ENCODE measurements at regions of chr18 and their contacts with region 1.

Region 1: GRCh38 chr18:9971313-9971920 is 57.6 kb downstream of the VAPA start:
- DNase-seq: peak; percentile 49 to 59 (median 57)
- H3K4me3 ChIP-seq: no peak overlapping the region
- H3K4me3 Mint-ChIP-seq: no peak overlapping the region
- H3K27ac ChIP-seq: no peak overlapping the region
- H3K27ac Mint-ChIP-seq: no peak overlapping the region
- H3K4me1 ChIP-seq: peaks cover 1% of the 10 kb centered on the region
- H3K4me1 Mint-ChIP-seq: peaks cover 7 to 29% (median 11%) of the 10 kb centered on the region in 4 donors
- H3K27me3 ChIP-seq: no peaks in the 10 kb centered on the region
- H3K27me3 Mint-ChIP-seq: peaks cover 27 to 28% of the 10 kb centered on the region in 2 donors

Region 2: GRCh38 chr18:9433671-9434121 is 537.7 kb before region 1 on chr18:
- CTCF ChIA-PET with region 1: no interaction called
- POLR2A ChIA-PET with region 1: no interaction called
- intact Hi-C with region 1: no loop called
- DNase-seq: no peak
- H3K4me3 ChIP-seq: no peak overlapping the region
- H3K4me3 Mint-ChIP-seq: no peak overlapping the region
- H3K27ac ChIP-seq: no peak overlapping the region
- H3K27ac Mint-ChIP-seq: no peak overlapping the region
- H3K4me1 ChIP-seq: no peaks in the 10 kb centered on the region
- H3K4me1 Mint-ChIP-seq: no peaks in the 10 kb centered on the region
- H3K27me3 ChIP-seq: no peaks in the 10 kb centered on the region
- H3K27me3 Mint-ChIP-seq: peaks cover 6 to 8% of the 10 kb centered on the region in 2 donors

Region 3: GRCh38 chr18:9961041-9961440 is 10.4 kb before region 1 on chr18:
- CTCF ChIA-PET with region 1: interaction called, 18 read pairs
- POLR2A ChIA-PET with region 1: no interaction called
- intact Hi-C with region 1: no loop called
- DNase-seq: no peak
- H3K4me3 ChIP-seq: no peak overlapping the region
- H3K4me3 Mint-ChIP-seq: no peak overlapping the region
- H3K27ac ChIP-seq: no peak overlapping the region
- H3K27ac Mint-ChIP-seq: peak overlapping the region in 2 of 7 donors; percentile 0 to 63
- H3K4me1 ChIP-seq: peaks cover 2% of the 10 kb centered on the region
- H3K4me1 Mint-ChIP-seq: peaks cover 16 to 35% (median 22%) of the 10 kb centered on the region in 4 donors
- H3K27me3 ChIP-seq: no peaks in the 10 kb centered on the region
- H3K27me3 Mint-ChIP-seq: no peaks in the 10 kb centered on the region

Region 4: DNA sequence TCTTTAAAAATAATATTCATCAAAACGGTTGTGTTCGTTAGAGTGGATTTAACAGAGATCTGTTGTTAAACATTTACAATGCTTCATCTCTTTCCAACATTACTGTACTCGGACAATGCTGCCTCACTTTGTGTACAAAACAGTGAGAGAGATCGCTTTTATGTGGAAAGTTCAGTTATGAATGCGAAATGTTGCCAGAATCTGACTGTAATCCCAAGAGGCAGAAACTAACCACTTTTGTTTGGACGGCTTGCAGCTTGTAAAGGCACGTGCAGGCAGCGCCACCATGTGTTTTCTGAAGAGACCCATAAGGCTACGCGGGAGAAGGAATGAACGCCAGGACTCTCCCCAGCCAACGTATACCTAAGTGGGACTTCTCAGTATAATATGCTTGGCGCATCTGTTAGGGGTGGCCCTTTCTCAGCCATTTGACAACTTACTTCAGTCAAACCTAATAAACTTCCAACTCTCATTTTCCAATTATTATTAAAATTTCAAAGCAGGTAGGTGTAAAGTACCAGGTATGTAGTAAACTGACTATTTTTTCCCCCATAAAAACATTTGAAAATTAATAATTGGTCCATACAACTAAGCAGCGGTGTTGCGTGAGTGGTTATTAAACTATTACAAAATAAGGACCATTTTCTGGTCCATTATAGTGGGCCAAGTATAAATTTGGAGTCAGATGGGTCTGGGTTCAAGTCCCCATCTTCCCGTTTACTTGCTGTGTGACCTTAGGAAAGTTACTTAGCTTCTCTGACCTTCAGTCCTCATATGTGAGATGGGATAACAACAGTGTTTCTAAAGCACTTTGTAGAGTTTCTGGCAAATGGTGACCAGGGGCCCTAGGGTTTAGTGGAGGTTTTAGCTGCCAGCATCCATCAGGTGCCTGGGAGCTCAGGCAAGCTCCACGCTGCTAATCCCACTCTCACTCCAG is 548.9 kb after region 1 on chr18:
- CTCF ChIA-PET with region 1: interaction called, 42 read pairs
- POLR2A ChIA-PET with region 1: no interaction called
- intact Hi-C with region 1: loop called (anchors 1 kb)
- DNase-seq: peak; percentile 40 to 55 (median 49)
- H3K4me3 ChIP-seq: no peak overlapping the region
- H3K4me3 Mint-ChIP-seq: no peak overlapping the region
- H3K27ac ChIP-seq: no peak overlapping the region
- H3K27ac Mint-ChIP-seq: no peak overlapping the region
- H3K4me1 ChIP-seq: peaks cover 9% of the 10 kb centered on the region
- H3K4me1 Mint-ChIP-seq: peaks cover 11 to 16% (median 13%) of the 10 kb centered on the region in 4 donors
- H3K27me3 ChIP-seq: no peaks in the 10 kb centered on the region
- H3K27me3 Mint-ChIP-seq: peaks cover 26 to 35% of the 10 kb centered on the region in 2 donors

Measured in CD4-positive, alpha-beta memory T cell (primary cell).